Activated T-helper 2 cell treated with anti-CD3 and anti-CD28 coated beads, Interferon-gamma antibody, Interleukin-2, Interleukin-4, amounts not matched to agents 10 μg/mL and 5 μg/mL and 100 μg/mL, durations not matched to agents 14 hours and 24 hours and 36 hours (primary cell): ENCODE measurements at regions of chr15 and their contacts with region 1.

Region 1: DNA sequence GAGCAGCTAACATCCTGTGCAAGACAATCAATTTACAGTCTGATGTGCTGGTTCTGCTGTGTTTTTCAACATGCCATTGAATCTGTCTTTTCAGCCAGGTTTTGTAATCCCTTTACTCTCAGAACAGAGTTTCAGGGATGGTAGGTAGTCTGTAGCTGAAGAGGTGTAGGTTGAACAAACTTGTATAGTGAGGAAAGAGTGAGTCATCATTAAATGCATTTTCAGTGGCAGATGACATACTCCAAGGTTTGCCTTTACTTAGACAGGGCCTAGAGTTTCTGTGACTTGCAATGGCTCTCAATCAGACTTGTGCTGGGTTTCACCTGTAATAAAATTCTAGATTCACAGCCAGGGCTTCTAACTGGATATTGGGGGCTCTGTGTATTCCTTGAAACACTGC is 94.6 kb downstream of the CYP19A1 start:
- DNase-seq: no peak
- H3K4me3 Mint-ChIP-seq: no peak overlapping the region
- H3K27ac Mint-ChIP-seq: peak overlapping the region; percentile 78
- H3K4me1 Mint-ChIP-seq: peaks cover 41% of the 10 kb centered on the region
- H3K27me3 Mint-ChIP-seq: peaks cover 10% of the 10 kb centered on the region

Region 2: GRCh38 chr15:51203797-51204196 is 40.0 kb before region 1 on chr15:
- intact Hi-C with region 1: loop called (anchors 5 kb)
- DNase-seq: no peak
- H3K4me3 Mint-ChIP-seq: no peak overlapping the region
- H3K27ac Mint-ChIP-seq: no peak overlapping the region
- H3K4me1 Mint-ChIP-seq: peaks cover 20% of the 10 kb centered on the region
- H3K27me3 Mint-ChIP-seq: peaks cover 5% of the 10 kb centered on the region

Region 3: GRCh38 chr15:51227940-51228783 is 15.6 kb before region 1 on chr15:
- intact Hi-C with region 1: loop called (anchors 1 kb)
- DNase-seq: peak; percentile 33
- H3K4me3 Mint-ChIP-seq: no peak overlapping the region
- H3K27ac Mint-ChIP-seq: peak overlapping the region; percentile 68
- H3K4me1 Mint-ChIP-seq: peaks cover 47% of the 10 kb centered on the region
- H3K27me3 Mint-ChIP-seq: no peaks in the 10 kb centered on the region

Region 4: DNA sequence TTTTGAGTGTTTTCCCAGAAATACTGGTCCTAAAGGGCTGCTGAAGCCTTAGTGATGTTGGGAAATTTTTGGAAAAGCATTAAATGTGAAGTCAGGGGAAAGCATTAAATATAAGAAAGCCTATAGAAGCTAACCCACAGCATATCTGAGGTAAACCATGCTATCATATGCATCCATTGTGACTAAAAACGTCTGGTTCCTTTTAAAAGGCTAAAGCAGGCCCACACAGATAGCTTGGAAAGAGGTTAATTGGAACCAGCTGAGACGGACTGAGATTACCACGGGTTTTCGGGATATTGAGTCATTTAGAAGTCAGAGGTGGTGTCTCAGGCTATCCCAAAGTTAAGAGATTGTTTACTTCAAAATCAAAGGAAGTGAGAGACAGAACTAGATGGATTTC is 16.5 kb after region 1 on chr15:
- intact Hi-C with region 1: loop called (anchors 2 kb)
- DNase-seq: no peak
- H3K4me3 Mint-ChIP-seq: no peak overlapping the region
- H3K27ac Mint-ChIP-seq: no peak overlapping the region
- H3K4me1 Mint-ChIP-seq: peaks cover 11% of the 10 kb centered on the region
- H3K27me3 Mint-ChIP-seq: peaks cover 3% of the 10 kb centered on the region

Region 5: GRCh38 chr15:51270706-51271105 is 26.9 kb after region 1 on chr15:
- intact Hi-C with region 1: loop called (anchors 2 kb)
- DNase-seq: no peak
- H3K4me3 Mint-ChIP-seq: no peak overlapping the region
- H3K27ac Mint-ChIP-seq: no peak overlapping the region
- H3K4me1 Mint-ChIP-seq: peaks cover 13% of the 10 kb centered on the region
- H3K27me3 Mint-ChIP-seq: peaks cover 20% of the 10 kb centered on the region